A673 (cell line): ENCODE measurements at regions of chr7 and their contacts with region 1.

Region 1: DNA sequence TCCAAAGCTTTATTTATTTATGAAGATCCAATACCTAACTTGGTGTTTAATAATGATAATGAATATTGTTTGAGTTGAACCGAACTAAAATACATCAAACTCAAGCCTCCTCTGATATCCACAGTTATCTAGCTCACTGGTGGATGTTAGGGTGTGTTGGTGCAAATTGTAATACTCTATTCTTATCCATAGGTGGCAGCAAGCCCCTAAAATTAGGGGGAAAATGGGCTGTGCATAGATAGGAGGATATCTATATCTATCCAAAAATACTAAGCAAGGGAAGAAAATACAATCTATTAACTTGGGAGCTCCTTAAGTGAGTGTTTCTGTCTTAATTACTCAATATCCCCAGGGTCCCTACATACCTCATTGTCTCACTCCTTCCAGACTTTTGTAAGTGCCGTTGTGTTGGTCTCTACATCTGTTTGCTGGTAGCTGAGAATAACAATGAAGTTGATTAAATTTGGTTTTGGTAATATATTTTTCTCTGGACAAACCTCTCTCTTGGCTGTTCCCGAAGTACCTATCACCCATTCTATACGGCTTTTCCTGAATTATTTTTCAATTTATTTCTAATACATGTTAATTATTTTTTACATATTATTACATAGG is 55.0 kb upstream of the VWDE start:
- DNase-seq: peak; percentile 70
- H3K4me3 ChIP-seq: no peak overlapping the region
- H3K27ac ChIP-seq: no peak overlapping the region
- H3K4me1 ChIP-seq: peaks cover 8% of the 10 kb centered on the region
- H3K27me3 ChIP-seq: no peaks in the 10 kb centered on the region
- CTCF ChIP-seq: peak; percentile 77

Region 2: GRCh38 chr7:12130636-12131035 is 328.0 kb before region 1 on chr7:
- CTCF ChIA-PET with region 1: no interaction called
- POLR2A ChIA-PET with region 1: no interaction called
- intact Hi-C with region 1: no loop called
- DNase-seq: no peak
- H3K4me3 ChIP-seq: no peak overlapping the region
- H3K27ac ChIP-seq: no peak overlapping the region
- H3K4me1 ChIP-seq: no peaks in the 10 kb centered on the region
- H3K27me3 ChIP-seq: no peaks in the 10 kb centered on the region
- CTCF ChIP-seq: no peak

Region 3: DNA sequence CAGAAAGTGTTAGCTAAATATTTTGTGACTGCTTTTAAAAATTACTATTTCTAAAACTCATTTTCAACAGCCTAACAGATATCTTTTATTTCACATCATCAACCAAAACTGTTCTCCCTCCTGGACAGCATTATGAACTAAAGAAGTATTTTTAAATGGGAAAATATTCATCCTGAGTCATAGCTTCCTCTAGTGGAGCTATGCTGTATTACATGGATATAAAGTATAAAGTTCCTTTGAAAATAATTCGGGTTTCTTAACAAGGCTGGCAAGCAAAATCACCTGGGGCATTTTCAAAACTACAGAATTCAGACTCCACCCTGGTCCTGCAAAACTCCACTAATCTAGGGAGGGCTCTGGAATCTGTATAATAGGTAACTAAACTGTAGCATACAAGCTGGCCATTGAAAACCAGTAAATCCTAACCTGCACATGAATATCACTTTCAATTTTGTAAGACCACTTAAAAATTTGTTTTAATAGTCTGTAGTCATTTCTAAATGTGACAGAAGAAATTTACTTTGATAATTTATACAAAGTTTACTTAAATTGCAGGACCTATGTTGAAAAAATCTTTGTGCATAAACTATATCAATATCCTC is 165.4 kb after region 1 on chr7:
- CTCF ChIA-PET with region 1: interaction called, 7 read pairs
- POLR2A ChIA-PET with region 1: no interaction called
- intact Hi-C with region 1: loop called (anchors 10 kb)
- DNase-seq: peak; percentile 56
- H3K4me3 ChIP-seq: peak overlapping the region; percentile 3
- H3K27ac ChIP-seq: no peak overlapping the region
- H3K4me1 ChIP-seq: no peaks in the 10 kb centered on the region
- H3K27me3 ChIP-seq: no peaks in the 10 kb centered on the region
- CTCF ChIP-seq: peak; percentile 81